ENCODE measurements at regions of chr10 and their contacts with region 1.

Region 1: GRCh38 chr10:19412531-19412930 is 363.9 kb downstream of the MALRD1 start:
- DNase-seq: no peak

Region 2: GRCh38 chr10:18968181-18968580 is 444.4 kb before region 1 on chr10:
- intact Hi-C with region 1: no loop called
- DNase-seq: no peak

Region 3: DNA sequence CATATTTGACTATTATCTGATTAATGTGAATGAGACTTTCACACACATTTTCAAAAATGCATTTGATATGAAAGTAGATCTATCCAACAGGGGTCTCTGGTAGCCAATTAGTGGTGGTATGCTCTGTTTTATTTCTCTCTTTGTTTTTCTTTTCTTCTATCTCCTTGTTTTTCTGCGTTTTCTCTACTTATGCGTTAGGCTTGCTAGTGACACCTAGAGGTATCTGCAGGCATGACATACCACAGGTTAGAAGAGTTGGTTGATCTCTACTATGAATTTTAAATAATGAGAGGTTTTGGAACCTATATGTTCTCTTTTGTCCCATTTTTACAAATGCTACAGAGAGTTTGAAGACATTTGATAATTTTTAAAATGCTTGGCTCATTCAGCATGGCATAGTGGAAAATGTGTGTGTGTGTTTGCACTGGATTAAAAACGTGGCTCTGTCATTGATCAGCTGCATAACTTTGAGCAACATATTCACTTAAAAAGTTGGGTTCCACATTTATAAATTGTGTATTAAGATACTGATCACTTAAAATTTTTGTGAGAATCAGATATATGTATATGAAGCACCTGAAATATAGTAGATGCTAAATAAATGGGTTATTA is 375.6 kb after region 1 on chr10:
- intact Hi-C with region 1: loop called (anchors 5 kb)
- DNase-seq: peak in 1 of 10 donors; percentile 18

Region 4: DNA sequence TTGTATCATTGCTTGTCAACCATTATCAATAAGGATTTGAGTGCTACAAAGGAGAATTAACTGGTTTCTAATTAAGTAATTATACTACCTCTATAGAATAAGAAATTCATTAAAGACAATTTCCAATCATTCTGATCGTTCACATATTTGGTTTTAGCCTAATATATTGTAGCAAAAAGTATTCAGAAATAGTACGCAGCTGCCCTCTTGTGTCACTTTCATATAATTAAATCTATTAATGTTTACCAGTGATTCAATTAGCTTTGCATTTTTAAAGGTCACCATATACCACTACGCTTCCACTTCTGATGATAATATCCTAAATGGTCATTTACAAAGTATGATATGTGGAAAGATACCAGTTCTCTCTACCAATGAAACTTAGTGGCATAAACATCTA is 1356.3 kb after region 1 on chr10:
- intact Hi-C with region 1: loop called (anchors 2 kb)
- DNase-seq: no peak

Region 5: GRCh38 chr10:20858292-20859124 is 1446.0 kb after region 1 on chr10:
- intact Hi-C with region 1: loop called (anchors 5 kb)
- DNase-seq: no peak